ENCODE measurements at regions of chr7 and their contacts with region 1.

Region 1: DNA sequence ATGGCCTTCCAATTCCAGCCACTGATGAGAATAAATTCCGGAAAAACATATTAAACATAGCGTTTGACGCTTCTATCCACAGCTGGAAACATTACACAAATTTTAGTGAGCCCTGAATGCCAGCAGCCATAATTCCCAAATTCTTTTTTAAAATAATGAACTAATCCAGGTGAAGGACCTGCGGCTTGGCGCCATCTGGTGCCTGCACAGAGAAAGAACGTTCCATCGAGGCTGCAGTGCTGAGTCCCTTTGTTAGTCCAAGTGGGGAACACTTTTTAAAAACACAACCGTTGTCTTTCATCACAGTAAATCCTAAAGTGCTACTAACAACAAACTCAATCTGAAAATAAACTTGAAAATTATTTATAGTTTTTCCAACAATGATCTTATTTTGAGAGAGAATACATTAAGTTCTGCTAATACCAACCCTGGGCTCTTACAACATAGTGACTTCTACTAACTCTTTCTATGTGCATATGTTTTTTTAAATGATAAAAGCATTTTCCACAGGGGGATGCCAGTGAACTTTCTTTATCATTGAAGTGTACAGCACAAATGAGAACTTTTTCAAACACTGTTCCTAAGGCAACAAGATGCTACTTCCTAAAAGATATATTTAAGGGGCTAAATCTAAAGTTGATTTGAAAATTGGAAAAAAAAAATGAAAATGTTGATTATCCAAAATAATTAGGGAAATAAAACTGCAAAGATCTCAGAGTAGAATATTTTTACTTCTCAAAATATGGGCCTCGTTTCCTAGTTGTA is 166.9 kb upstream of the RNF32 start:
- DNase-seq: no peak
- H3K4me3 ChIP-seq: no peak overlapping the region
- H3K27ac ChIP-seq: no peak overlapping the region
- H3K4me1 ChIP-seq: peaks cover 0 to 13% (median 5%) of the 10 kb centered on the region in 4 donors
- H3K27me3 ChIP-seq: peaks cover 0 to 11% (median 0%) of the 10 kb centered on the region in 4 donors
- CTCF ChIP-seq: peak; percentile 39 to 62 (median 51)
- EP300 ChIP-seq: no peak
- POLR2A ChIP-seq: no peak

Region 2: GRCh38 chr7:155815332-155816191 is 658.1 kb before region 1 on chr7:
- intact Hi-C with region 1: loop called (anchors 5 kb)
- DNase-seq: no peak
- H3K4me3 ChIP-seq: no peak overlapping the region
- H3K27ac ChIP-seq: no peak overlapping the region
- H3K4me1 ChIP-seq: peaks cover 0 to 21% (median 12%) of the 10 kb centered on the region in 4 donors
- H3K27me3 ChIP-seq: peaks cover 0 to 100% (median 23%) of the 10 kb centered on the region in 4 donors
- CTCF ChIP-seq: peak; percentile 37 to 50 (median 49)
- EP300 ChIP-seq: no peak
- POLR2A ChIP-seq: no peak

Region 3: GRCh38 chr7:156423876-156424275 is 49.8 kb before region 1 on chr7:
- intact Hi-C with region 1: no loop called
- DNase-seq: no peak
- H3K4me3 ChIP-seq: no peak overlapping the region
- H3K27ac ChIP-seq: no peak overlapping the region
- H3K4me1 ChIP-seq: no peaks in the 10 kb centered on the region
- H3K27me3 ChIP-seq: peaks cover 0 to 8% (median 0%) of the 10 kb centered on the region in 4 donors
- CTCF ChIP-seq: no peak
- EP300 ChIP-seq: no peak
- POLR2A ChIP-seq: no peak